Heart left ventricle (tissue), 16 donors: ENCODE measurements at regions of chr10 and their contacts with region 1.

Region 1: DNA sequence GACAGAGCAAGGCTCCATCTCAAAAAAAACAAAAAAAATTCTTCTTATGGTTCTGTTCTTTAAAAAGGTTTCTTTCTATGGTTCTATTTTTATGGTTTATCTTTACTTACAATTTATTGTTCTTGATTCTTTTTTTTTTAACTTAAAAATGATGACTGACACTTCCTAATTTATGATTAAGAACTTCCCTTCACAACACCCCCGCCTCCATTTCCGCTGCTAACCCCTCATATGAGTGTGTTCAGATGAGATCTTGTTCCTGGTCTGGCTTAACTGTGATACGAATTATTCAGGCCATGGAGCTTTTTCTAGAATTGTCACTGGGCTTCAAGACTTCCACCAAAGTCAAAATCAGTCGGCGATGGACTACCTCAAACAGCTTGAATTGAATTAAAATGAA is 33.9 kb downstream of the PTER start:
- DNase-seq: no peak
- ATAC-seq: no peak
- H3K4me3 ChIP-seq: no peak overlapping the region
- H3K27ac ChIP-seq: no peak overlapping the region
- H3K4me1 ChIP-seq: no peaks in the 10 kb centered on the region
- H3K27me3 ChIP-seq: no peaks in the 10 kb centered on the region
- CTCF ChIP-seq: no peak
- POLR2A ChIP-seq: no peak

Region 2: GRCh38 chr10:16417341-16417740 is 53.4 kb before region 1 on chr10:
- intact Hi-C with region 1: loop called in 1 of 10 experiments (anchors 10 kb)
- DNase-seq: no peak
- ATAC-seq: no peak
- H3K4me3 ChIP-seq: no peak overlapping the region
- H3K27ac ChIP-seq: no peak overlapping the region
- H3K4me1 ChIP-seq: no peaks in the 10 kb centered on the region
- H3K27me3 ChIP-seq: peaks cover 0 to 28% (median 2%) of the 10 kb centered on the region in 9 donors
- CTCF ChIP-seq: no peak
- POLR2A ChIP-seq: no peak